MCF 10A (cell line): ENCODE measurements at regions of chr1 and their contacts with region 1.

Region 1: GRCh38 chr1:199279872-199280645 is 641.2 kb downstream of the PTPRC start:
- DNase-seq: no peak
- H3K4me3 Mint-ChIP-seq: no peak overlapping the region
- H3K27ac Mint-ChIP-seq: no peak overlapping the region
- H3K4me1 Mint-ChIP-seq: peaks cover 6% of the 10 kb centered on the region
- H3K27me3 Mint-ChIP-seq: no peaks in the 10 kb centered on the region
- CTCF ChIP-seq: no peak

Region 2: GRCh38 chr1:199301472-199302217 is 21.6 kb after region 1 on chr1:
- CTCF ChIA-PET with region 1: no interaction called
- POLR2A ChIA-PET with region 1: no interaction called
- intact Hi-C with region 1: loop called (anchors 2 kb)
- DNase-seq: no peak
- H3K4me3 Mint-ChIP-seq: no peak overlapping the region
- H3K27ac Mint-ChIP-seq: no peak overlapping the region
- H3K4me1 Mint-ChIP-seq: peaks cover 18% of the 10 kb centered on the region
- H3K27me3 Mint-ChIP-seq: no peaks in the 10 kb centered on the region
- CTCF ChIP-seq: no peak